ENCODE measurements at regions of chr2 and their contacts with region 1.

Region 1: DNA sequence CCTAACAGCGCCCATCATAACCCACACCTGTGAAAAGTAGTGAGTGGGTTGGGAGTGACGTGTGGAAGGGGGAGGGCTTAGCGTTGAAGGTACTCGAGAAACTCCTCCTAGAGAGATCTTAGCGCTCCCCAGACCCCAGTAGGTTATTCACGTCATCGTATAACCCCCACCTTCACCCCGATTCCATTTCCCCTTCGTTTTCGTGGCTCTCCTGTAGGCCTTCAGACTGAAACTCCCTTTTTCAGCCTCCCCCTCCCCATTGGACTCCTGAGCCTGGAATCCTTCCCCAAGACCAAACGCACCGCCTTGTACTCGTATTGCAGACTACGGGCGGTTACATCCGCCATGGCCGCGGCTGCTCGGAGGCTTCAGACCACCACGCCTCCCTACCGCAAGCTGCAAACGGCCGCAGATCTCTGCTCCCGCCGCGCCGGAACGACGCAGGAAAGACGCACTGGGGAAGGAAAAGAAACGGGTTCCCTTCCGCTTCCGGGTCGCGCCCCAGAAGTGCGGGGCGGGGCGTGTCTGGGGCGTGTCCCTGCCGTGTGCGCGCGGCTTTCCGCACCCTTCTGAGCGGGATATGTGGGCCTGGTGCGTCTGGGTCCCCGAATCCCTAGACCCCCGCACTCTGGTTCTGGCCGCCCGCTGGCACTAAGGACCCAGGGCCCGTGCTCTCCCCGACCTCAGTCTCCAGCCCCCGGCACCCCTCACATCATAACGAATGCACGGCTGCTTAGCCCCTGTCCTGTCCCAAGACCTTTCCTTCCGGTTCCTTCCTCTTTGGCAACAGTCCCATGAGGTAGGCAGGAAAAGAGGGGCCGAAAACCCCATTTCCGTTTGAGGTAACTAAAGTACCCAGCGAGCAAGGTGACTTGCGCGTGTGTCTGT is at the start of gene SNRNP200:
- H3K4me3 Mint-ChIP-seq: peak within 1 kb of the TSS; percentile 94
- H3K27ac Mint-ChIP-seq: peak within 1 kb of the TSS; percentile 96
- H3K4me1 Mint-ChIP-seq: peaks cover 75% of the 10 kb centered on the region
- H3K27me3 Mint-ChIP-seq: no peaks in the 10 kb centered on the region

Region 2: GRCh38 chr2:95526360-95527341 is 778.7 kb before region 1 on chr2:
- intact Hi-C with region 1: no loop called
- H3K4me3 Mint-ChIP-seq: peak overlapping the region; percentile 68
- H3K27ac Mint-ChIP-seq: no peak overlapping the region
- H3K4me1 Mint-ChIP-seq: peaks cover 14% of the 10 kb centered on the region
- H3K27me3 Mint-ChIP-seq: peaks cover 17% of the 10 kb centered on the region

Region 3: GRCh38 chr2:96099861-96100798 is 205.2 kb before region 1 on chr2:
- intact Hi-C with region 1: no loop called
- H3K4me3 Mint-ChIP-seq: no peak overlapping the region
- H3K27ac Mint-ChIP-seq: no peak overlapping the region
- H3K4me1 Mint-ChIP-seq: peaks cover 58% of the 10 kb centered on the region
- H3K27me3 Mint-ChIP-seq: peaks cover 9% of the 10 kb centered on the region

Region 4: DNA sequence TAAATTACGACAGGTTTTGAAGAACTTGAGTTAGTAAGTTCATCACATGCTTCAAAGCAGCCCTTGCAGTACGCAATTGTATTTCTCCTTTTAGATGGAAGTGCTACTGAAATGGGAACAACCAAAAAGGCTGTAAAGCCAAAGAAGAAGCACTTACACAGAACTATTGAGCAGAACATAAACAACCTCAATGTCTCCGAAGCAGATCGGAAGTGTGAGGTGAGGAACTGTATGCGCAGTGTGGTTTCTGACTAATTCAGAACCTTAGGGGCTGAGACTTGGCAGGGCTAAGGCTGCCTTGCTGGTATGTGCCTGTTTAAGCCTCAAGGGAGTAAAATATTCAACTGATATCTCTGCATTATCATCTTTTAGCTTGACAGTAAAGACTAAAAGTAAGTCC is 38.7 kb after region 1 on chr2:
- intact Hi-C with region 1: loop called (anchors 5 kb)
- H3K4me3 Mint-ChIP-seq: no peak overlapping the region
- H3K27ac Mint-ChIP-seq: peak overlapping the region; percentile 98
- H3K4me1 Mint-ChIP-seq: peaks cover 76% of the 10 kb centered on the region
- H3K27me3 Mint-ChIP-seq: no peaks in the 10 kb centered on the region